Body of pancreas (tissue), 4 donors: ENCODE measurements at regions of chr2 and their contacts with region 1.

Region 1: GRCh38 chr2:230828272-230828961 is 36.3 kb upstream of the ITM2C start:
- DNase-seq: no peak
- ATAC-seq: no peak
- H3K4me3 ChIP-seq: no peak overlapping the region
- H3K27ac ChIP-seq: no peak overlapping the region
- H3K4me1 ChIP-seq: peaks cover 15% of the 10 kb centered on the region
- H3K27me3 ChIP-seq: peaks cover 0 to 8% of the 10 kb centered on the region in 2 donors
- CTCF ChIP-seq: no peak
- POLR2A ChIP-seq: no peak

Region 2: DNA sequence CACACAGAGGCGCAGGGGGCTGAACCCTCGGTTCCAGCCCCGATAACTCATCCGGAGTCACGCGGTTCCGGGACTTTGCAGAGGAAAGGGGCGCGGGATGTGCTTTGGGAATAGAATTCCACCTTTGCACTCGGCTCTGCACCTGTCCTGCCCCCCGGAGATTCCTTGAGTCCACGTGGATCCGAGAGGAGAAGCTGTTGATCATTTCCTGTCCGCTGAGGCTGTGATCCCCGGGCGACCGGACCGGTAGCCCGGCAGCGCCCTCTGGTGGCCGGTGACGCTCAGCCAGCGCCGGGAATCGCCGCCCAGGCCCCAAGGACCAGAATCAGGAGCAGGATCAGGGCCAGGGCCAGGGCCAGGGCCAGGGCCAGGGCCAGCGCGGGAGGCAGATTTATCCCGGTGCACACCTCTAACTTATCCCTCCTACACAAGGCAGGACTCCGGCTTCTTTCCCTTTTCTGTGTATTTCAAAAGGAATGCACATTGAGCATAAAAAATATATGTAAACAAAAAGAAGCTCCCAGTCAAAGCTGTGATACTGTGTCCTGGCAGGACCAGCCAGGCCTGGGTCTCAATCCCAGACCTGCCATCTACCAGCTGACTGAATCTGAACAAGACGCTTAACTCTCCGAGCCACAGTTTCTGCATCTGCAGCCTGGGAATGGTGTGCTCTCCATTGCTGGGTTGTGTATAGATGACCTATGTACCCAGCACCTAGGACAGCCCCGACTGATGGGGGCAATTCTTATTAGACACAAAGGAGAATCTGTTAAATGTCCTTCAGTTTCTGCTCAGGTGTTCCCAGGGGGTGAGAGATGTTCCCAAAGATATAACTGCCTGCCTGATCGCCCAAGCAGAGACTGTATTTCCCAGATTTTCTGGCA is 159.0 kb after region 1 on chr2:
- intact Hi-C with region 1: loop called (anchors 5 kb)
- DNase-seq: peak; percentile 83 to 86 (median 84)
- ATAC-seq: peak; percentile 89
- H3K4me3 ChIP-seq: no peak overlapping the region
- H3K27ac ChIP-seq: no peak overlapping the region
- H3K4me1 ChIP-seq: peaks cover 6% of the 10 kb centered on the region
- H3K27me3 ChIP-seq: peaks cover 0 to 5% of the 10 kb centered on the region in 2 donors
- CTCF ChIP-seq: peak; percentile 83 to 96 (median 89)
- POLR2A ChIP-seq: no peak

Region 3: GRCh38 chr2:232668805-232669444 is 1840.5 kb after region 1 on chr2:
- intact Hi-C with region 1: no loop called
- DNase-seq: peak in 3 of 4 donors; percentile 10 to 18 (median 13)
- ATAC-seq: no peak
- H3K4me3 ChIP-seq: no peak overlapping the region
- H3K27ac ChIP-seq: no peak overlapping the region
- H3K4me1 ChIP-seq: peaks cover 13% of the 10 kb centered on the region
- H3K27me3 ChIP-seq: no peaks in the 10 kb centered on the region
- CTCF ChIP-seq: peak in 4 of 7 experiments; percentile 8 to 28 (median 22)
- POLR2A ChIP-seq: no peak